ENCODE measurements at regions of chr4 and their contacts with region 1.

Region 1: DNA sequence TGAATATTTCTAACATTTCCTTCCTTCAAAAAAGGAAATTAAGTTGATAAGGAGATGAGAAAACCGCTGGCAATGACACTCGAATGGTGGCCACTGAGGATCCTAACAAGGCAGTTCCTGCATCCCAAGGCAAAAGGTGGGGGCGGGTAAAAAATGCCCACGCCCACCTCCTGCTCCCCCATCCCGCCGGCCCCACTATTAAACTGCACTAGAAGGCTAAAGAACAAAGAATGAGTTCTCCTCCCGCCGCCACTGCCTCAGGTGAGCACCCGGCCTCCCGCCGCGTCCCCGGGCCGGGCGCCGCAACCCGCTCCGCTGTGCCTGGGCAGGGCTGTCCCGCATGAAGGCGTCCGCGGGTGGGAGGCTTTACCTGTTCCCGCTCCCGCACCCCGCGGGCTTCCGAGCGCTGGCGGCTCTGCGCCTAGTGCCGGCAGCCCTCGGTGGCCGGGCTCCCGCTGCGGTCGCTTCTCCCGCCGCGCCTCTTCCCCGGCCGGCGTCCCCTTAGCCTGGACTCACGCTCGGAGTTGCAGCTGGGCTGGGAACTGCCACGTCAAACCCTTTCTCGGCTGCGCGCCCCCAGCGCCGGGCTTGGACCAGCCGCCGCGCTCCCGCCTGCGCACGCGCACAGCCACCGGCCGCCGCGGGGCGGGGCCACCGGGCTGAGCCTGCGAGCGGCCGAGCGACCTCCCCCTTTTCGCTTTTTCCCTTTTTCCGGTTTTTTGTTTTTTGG is at the start of gene SEC24D:
- DNase-seq: peak; percentile 81
- H3K4me3 ChIP-seq: peak within 1 kb of the TSS; percentile 75 to 80 (median 78)
- H3K27ac ChIP-seq: peak within 1 kb of the TSS; percentile 91
- H3K4me1 ChIP-seq: peaks cover 6% of the 10 kb centered on the region
- H3K27me3 ChIP-seq: no peaks in the 10 kb centered on the region
- CTCF ChIP-seq: no peak
- total RNA-seq, gene SEC24D: 41.8 to 70.6 TPM

Region 2: GRCh38 chr4:118865091-118865708 is 29.5 kb after region 1 on chr4:
- CTCF ChIA-PET with region 1: no interaction called
- dilution Hi-C with region 1: no loop called
- in situ Hi-C with region 1: no loop called
- intact Hi-C with region 1: loop called (anchors 1 kb)
- DNase-seq: peak; percentile 78
- H3K4me3 ChIP-seq: no peak overlapping the region
- H3K27ac ChIP-seq: no peak overlapping the region
- H3K4me1 ChIP-seq: peaks cover 3% of the 10 kb centered on the region
- H3K27me3 ChIP-seq: no peaks in the 10 kb centered on the region
- CTCF ChIP-seq: peak; percentile 89 to 90